Head of caudate nucleus (tissue), 42 donors: ENCODE measurements at regions of chr3 and their contacts with region 1.

Region 1: DNA sequence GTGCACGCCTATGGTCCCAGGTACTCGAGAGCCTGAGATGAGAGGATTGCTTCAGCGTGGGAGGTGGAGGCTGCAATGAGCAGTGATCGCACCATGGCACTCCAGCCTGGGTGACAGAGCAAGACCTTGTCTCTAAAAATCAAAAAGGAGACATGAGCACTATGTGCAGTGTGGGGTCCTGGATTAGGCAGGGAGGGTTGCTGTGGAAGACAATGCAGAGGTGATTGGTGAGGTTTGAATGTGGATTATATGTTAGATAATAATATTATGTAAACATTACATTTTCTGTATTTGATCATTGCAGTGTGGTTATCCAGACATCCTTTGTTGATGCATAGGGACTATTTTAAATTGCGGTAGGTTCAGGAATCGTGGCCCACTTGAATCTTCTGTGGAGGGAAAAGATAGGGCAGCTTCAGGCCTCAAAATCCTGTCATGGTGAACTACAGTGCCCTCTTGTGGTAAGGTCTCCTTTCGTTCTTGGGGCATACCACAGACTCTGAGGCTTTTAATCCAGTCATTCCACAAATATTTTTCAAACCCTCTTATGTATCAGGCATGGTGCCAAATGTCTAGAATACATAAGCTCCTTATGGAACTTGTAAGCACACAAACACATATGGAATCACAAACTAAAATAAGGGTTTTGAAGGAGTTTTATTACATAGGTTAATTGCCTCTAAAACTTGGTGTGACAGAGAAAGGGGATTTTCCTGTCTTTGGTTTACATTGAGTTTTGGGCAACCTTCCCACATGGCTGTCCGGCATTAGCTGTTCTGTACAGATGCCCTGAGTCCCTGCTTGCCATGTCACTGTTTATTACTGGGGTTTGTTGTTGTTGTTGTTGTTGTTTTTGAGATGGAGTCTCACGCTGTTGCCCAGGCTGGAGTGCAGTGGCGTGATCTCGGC is 37.7 kb downstream of the GPD1L start:
- DNase-seq: peak in 33 of 42 donors; percentile 20 to 88 (median 66)

Region 2: GRCh38 chr3:31755926-31756658 is 388.0 kb before region 1 on chr3:
- intact Hi-C with region 1: no loop called
- DNase-seq: no peak

Region 3: GRCh38 chr3:32021164-32021563 is 122.9 kb before region 1 on chr3:
- intact Hi-C with region 1: loop called (anchors 2 kb)
- DNase-seq: no peak

Region 4: GRCh38 chr3:32106280-32106928 is 37.7 kb before region 1 on chr3 and contains the start of gene GPD1L:
- intact Hi-C with region 1: loop called (anchors 2 kb)
- DNase-seq: peak; percentile 87 to 99 (median 97)